ENCODE measurements at regions of chr6 and their contacts with region 1.

Region 1: GRCh38 chr6:87897013-87897412 is 150.6 kb upstream of the SPACA1 start:
- DNase-seq: no peak
- CTCF ChIP-seq: no peak

Region 2: DNA sequence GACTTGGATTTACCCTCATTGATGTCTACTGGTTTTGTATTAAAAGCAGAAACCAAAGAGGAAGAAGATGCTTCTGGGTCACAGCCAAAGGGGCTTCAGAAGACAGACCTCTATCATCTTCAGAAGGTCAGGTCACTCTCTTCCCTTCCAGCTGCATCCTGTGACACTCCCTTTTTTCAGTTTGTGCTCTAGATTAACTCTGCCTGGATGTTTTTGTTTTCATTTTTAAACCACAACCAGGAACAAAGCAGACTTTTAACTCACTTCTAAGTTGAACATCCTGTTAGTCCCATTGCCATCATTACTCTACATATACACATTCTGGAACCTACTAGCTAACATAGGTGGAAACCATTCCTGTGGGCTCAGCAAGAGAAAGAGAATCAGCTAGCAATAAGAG is 240.2 kb before region 1 on chr6:
- CTCF ChIA-PET with region 1: no interaction called
- POLR2A ChIA-PET with region 1: no interaction called
- DNase-seq: no peak
- CTCF ChIP-seq: no peak

Region 3: GRCh38 chr6:87756858-87757257 is 140.2 kb before region 1 on chr6:
- CTCF ChIA-PET with region 1: no interaction called
- POLR2A ChIA-PET with region 1: no interaction called
- DNase-seq: peak; percentile 75
- CTCF ChIP-seq: no peak

Region 4: GRCh38 chr6:87879132-87879861 is 17.7 kb before region 1 on chr6:
- CTCF ChIA-PET with region 1: interaction called, 12 read pairs
- POLR2A ChIA-PET with region 1: no interaction called
- DNase-seq: peak; percentile 20
- CTCF ChIP-seq: no peak